ENCODE measurements at regions of chr7 and their contacts with region 1.

Region 1: DNA sequence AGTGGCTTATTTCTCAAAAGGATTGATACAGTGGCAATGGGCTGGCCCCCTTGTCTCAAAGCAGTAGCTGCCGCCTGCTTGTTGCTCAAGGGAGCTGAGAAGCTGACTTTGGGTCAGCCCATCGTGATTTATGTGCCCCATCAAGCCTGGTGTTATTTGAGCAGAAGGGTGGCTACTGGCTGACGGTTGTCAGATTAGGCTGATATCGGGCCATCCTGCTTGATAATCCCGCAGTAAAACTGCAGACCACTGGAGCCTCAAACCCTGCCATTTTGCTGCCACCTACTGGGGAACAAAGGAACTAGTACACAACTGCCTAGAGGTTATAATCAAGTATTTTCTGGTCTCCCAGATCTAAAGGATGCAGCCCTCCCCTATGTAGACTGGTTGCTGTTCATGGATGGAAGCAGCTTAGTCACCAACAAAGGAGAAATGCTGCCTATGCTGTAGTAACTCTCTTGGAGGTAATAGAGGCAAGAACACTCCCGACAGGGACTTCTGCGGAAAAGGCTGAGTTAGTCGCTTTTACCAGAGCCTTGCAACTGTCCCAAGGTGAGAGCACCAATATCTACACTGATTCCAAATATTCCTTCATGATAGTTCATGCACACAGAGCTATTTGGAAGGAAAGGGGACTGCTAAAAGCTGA is 65.9 kb upstream of the ZNF92 start:
- DNase-seq: peak; percentile 71 to 86 (median 84)
- H3K4me3 ChIP-seq: no peak overlapping the region
- H3K27ac ChIP-seq: no peak overlapping the region
- H3K4me1 ChIP-seq: no peaks in the 10 kb centered on the region
- H3K27me3 ChIP-seq: peaks cover 0 to 9% (median 3%) of the 10 kb centered on the region in 5 experiments

Region 2: DNA sequence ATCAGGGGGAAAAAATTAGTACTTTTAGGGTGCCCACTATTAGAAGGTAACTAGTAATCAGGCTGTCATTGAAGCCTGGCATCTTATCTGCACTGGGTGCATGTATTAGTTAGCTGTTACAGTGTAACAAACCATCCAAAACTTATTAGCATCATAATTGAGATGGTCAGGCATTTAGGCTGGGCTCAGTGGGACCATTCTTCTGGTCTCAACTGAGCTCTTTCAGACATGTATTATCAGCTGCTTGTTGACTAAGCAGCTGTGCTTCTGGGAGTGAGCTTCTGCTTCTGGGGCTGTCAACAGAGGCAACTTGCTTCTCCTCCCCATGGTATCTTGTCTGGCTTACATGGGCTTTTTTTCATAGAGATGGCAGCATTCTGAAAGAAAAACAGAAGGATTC is 88.2 kb before region 1 on chr7:
- CTCF ChIA-PET with region 1: interaction called, 11 read pairs
- POLR2A ChIA-PET with region 1: no interaction called
- DNase-seq: no peak
- H3K4me3 ChIP-seq: no peak overlapping the region
- H3K27ac ChIP-seq: no peak overlapping the region
- H3K4me1 ChIP-seq: no peaks in the 10 kb centered on the region
- H3K27me3 ChIP-seq: no peaks in the 10 kb centered on the region